ENCODE measurements at regions of chr7 and their contacts with region 1.

Region 1: DNA sequence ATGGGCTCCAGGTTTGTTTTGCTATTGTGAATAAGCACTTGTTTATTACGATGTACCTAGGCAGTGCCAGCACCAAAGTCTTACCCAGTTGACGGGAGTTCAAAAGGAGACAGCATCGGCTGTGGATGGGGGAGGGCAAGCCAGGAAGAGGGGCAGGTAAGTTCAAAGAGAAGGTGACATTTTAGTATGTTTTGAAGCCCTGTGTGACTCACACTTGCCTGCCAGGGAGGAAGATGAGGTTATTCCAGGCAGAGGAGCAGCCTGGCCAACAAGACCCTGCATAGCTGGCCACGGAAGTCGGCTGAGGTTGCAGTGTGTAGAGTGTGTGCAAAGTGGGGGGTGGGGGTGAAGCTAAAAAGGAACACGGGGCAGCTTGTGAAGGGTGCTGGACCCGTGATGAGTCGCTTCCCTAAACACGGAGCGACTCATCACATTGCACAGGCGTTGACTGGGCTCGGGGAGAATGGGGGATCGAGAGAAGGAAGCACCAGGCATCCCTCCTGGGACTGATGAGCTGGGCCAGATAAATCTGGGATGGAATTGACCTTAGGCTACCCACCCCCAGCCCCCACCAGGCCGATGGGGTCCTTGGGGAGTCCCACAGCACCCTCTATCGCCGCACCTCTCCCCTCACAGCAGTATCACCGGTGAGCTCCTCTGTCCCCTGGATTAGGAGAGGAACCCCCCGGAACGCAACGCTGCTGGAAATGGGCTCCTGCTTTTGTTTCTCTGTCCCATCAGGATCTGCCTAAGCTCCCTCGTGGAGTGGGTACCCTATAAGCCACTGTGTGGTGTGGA is 97.9 kb upstream of the IKZF1 start:
- DNase-seq: no peak
- ATAC-seq: no peak
- H3K4me3 ChIP-seq: no peak overlapping the region
- H3K27ac ChIP-seq: no peak overlapping the region
- H3K4me1 ChIP-seq: peaks cover 8 to 10% of the 10 kb centered on the region in 2 experiments
- H3K27me3 ChIP-seq: no peaks in the 10 kb centered on the region; a peak in 1 of 5 replicates
- CTCF ChIP-seq: no peak
- EP300 ChIP-seq: no peak
- POLR2A ChIP-seq: no peak
- RAD21 ChIP-seq: no peak

Region 2: GRCh38 chr7:50359995-50360925 is 153.6 kb after region 1 on chr7:
- CTCF ChIA-PET with region 1: no interaction called
- POLR2A ChIA-PET with region 1: interaction called, 3 read pairs
- in situ Hi-C with region 1: loop called (anchors 5 kb)
- intact Hi-C with region 1: no loop called
- DNase-seq: peak; percentile 83 to 88 (median 86)
- ATAC-seq: peak; percentile 64
- H3K4me3 ChIP-seq: no peak overlapping the region
- H3K27ac ChIP-seq: peak overlapping the region; percentile 77
- H3K4me1 ChIP-seq: peaks cover 49 to 72% of the 10 kb centered on the region in 2 experiments
- H3K27me3 ChIP-seq: no peaks in the 10 kb centered on the region
- CTCF ChIP-seq: no peak
- EP300 ChIP-seq: peak; percentile 86
- POLR2A ChIP-seq: no peak
- RAD21 ChIP-seq: peak in 1 of 2 experiments; percentile 15; a peak in 1 of 4 replicates

Region 3: DNA sequence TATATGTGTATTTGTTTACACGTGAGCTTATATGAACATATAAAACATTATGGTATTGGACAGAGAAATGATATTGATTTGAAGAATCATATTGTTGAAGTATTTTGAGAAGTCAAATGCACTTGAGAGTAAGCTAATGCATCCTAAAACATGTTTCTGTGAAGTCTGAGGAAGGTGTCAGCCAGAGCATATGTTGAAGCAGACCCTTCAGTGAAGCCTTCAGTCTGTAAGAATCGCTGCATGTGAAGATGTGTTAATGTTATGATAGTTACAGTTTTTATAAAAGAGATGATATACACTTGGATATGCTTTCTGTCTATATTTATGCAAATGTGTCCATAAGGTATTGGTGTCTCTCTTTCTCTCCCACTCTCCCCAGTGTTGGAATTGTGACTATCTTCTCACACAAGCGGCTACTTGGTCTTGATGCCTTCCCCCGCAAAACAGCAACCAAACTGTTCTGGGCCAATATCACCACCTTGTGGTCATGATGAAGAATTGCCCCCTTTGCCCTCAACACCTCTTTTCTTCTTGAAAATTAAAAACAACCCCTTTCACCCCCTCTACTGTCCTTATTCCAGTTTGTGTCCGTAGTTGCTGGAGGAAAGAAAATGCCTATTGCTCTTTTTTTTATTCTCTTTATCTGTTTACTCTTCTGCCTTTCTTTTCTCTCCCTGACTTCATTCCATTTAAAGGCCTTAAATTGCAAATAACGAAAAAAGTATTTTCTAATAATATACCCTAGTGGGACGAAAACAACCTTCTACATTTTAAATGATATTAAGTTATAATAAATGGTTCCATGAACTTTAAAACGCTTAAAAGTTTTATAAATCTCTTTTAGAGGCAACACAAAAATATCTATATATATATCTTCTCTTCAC is 162.7 kb after region 1 on chr7:
- CTCF ChIA-PET with region 1: interaction called, 62 read pairs
- POLR2A ChIA-PET with region 1: interaction called, 3 read pairs
- in situ Hi-C with region 1: loop called (anchors 5 kb)
- intact Hi-C with region 1: loop called (anchors 1 kb)
- DNase-seq: peak; percentile 70 to 88 (median 71)
- ATAC-seq: peak; percentile 90
- H3K4me3 ChIP-seq: no peak overlapping the region
- H3K27ac ChIP-seq: no peak overlapping the region
- H3K4me1 ChIP-seq: peaks cover 0 to 2% of the 10 kb centered on the region in 2 experiments; a peak in 1 of 5 replicates
- H3K27me3 ChIP-seq: no peaks in the 10 kb centered on the region
- CTCF ChIP-seq: peak; percentile 89 to 95 (median 92)
- EP300 ChIP-seq: no peak
- POLR2A ChIP-seq: no peak
- RAD21 ChIP-seq: peak; percentile 96 to 98

Measured in K562 (cell line).